AG04449 (cell line): ENCODE measurements at regions of chr16 and their contacts with region 1.

Region 1: GRCh38 chr16:49350265-49351095 is 23.1 kb upstream of the C16orf78 start:
- DNase-seq: no peak
- H3K4me3 ChIP-seq: no peak overlapping the region
- CTCF ChIP-seq: peak; percentile 91

Region 2: GRCh38 chr16:48687421-48688038 is 663.0 kb before region 1 on chr16:
- CTCF ChIA-PET with region 1: interaction called, 92 read pairs
- POLR2A ChIA-PET with region 1: no interaction called
- DNase-seq: peak; percentile 4
- H3K4me3 ChIP-seq: no peak overlapping the region
- CTCF ChIP-seq: peak; percentile 75

Region 3: DNA sequence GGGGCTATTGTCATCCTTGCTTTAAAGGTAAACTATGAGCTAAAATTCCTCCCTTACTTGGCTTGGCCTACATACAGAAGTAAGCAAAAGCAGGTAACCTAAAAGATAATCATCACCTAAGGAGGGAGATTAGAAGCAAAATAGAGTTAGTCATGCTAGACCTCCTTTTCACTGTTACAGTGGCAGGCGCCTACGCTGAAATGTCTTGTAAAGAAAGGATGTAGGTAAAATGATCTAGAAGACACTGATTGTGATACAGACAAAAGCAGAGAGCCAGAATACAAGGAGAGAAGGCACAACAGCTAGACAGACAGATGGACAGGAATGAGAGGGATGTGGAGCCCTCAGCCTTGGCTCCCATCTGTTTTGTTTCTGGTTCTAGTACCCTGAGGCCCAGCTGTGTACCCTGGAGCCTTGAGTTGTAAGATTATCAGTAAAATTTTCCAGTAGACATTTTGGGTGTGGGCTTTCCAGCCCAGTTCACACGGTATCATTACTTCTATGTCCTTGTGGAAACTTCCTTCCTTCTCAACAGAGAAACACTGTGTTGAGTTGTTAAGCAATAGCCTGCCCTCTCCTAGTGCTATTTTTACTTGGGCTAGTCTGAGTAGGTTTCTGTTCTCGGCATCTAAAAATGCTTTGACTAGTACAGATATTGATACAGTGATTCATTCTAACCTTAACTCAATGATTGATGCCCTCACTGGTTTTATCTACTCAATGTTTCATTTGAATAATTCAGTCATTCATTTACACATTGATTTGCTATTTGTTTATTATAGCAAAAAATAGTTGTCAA is 15.4 kb after region 1 on chr16:
- CTCF ChIA-PET with region 1: no interaction called
- POLR2A ChIA-PET with region 1: no interaction called
- DNase-seq: no peak
- H3K4me3 ChIP-seq: no peak overlapping the region
- CTCF ChIP-seq: no peak

Region 4: GRCh38 chr16:49407873-49408550 is 57.5 kb after region 1 on chr16:
- CTCF ChIA-PET with region 1: no interaction called
- POLR2A ChIA-PET with region 1: no interaction called
- DNase-seq: peak; percentile 12
- H3K4me3 ChIP-seq: no peak overlapping the region
- CTCF ChIP-seq: peak; percentile 94